ENCODE measurements at regions of chr19 and their contacts with region 1.

Region 1: GRCh38 chr19:40662921-40663694 is 27.3 kb downstream of the NUMBL start:
- DNase-seq: peak; percentile 71 to 79 (median 72)
- H3K4me3 ChIP-seq: peak overlapping the region; percentile 45 to 82 (median 71)
- H3K4me3 Mint-ChIP-seq: peak overlapping the region; percentile 74 to 90
- H3K27ac ChIP-seq: no peak overlapping the region
- H3K27ac Mint-ChIP-seq: peak overlapping the region in 4 of 7 donors; percentile 21 to 43 (median 33)
- H3K4me1 ChIP-seq: peaks cover 10 to 16% of the 10 kb centered on the region in 2 donors
- H3K4me1 Mint-ChIP-seq: peaks cover 9% of the 10 kb centered on the region
- H3K27me3 ChIP-seq: peaks cover 0 to 7% of the 10 kb centered on the region in 2 donors
- H3K27me3 Mint-ChIP-seq: peaks cover 14 to 22% (median 17%) of the 10 kb centered on the region in 3 donors
- CTCF ChIP-seq: peak; percentile 97

Region 2: GRCh38 chr19:40777937-40778705 is 115.0 kb after region 1 on chr19 and contains the start of gene RAB4B:
- intact Hi-C with region 1: no loop called
- DNase-seq: peak; percentile 99 to 100 (median 99)
- H3K4me3 ChIP-seq: peak within 1 kb of the TSS; percentile 69 to 89 (median 85)
- H3K4me3 Mint-ChIP-seq: peak within 1 kb of the TSS; percentile 94 to 97
- H3K27ac ChIP-seq: peak within 1 kb of the TSS; percentile 95 to 97
- H3K27ac Mint-ChIP-seq: peak within 1 kb of the TSS; percentile 97 to 100 (median 99)
- H3K4me1 ChIP-seq: peaks cover 19 to 24% of the 10 kb centered on the region in 2 donors
- H3K4me1 Mint-ChIP-seq: peaks cover 33% of the 10 kb centered on the region
- H3K27me3 ChIP-seq: no peaks in the 10 kb centered on the region
- H3K27me3 Mint-ChIP-seq: peaks cover 0 to 1% (median 0%) of the 10 kb centered on the region in 3 donors
- CTCF ChIP-seq: no peak
- polyA plus RNA-seq, gene RAB4B: 89.4 to 132 (median 108) TPM

Region 3: GRCh38 chr19:40815223-40815814 is 152.2 kb after region 1 on chr19:
- intact Hi-C with region 1: loop called (anchors 5 kb)
- DNase-seq: no peak
- H3K4me3 ChIP-seq: no peak overlapping the region
- H3K4me3 Mint-ChIP-seq: peak overlapping the region in 1 of 2 donors; percentile 6
- H3K27ac ChIP-seq: no peak overlapping the region
- H3K27ac Mint-ChIP-seq: peak overlapping the region in 1 of 7 donors; percentile 58
- H3K4me1 ChIP-seq: peaks cover 31 to 41% of the 10 kb centered on the region in 2 donors
- H3K4me1 Mint-ChIP-seq: peaks cover 46% of the 10 kb centered on the region
- H3K27me3 ChIP-seq: peaks cover 0 to 5% of the 10 kb centered on the region in 2 donors
- H3K27me3 Mint-ChIP-seq: peaks cover 13 to 31% (median 25%) of the 10 kb centered on the region in 3 donors
- CTCF ChIP-seq: no peak

Region 4: DNA sequence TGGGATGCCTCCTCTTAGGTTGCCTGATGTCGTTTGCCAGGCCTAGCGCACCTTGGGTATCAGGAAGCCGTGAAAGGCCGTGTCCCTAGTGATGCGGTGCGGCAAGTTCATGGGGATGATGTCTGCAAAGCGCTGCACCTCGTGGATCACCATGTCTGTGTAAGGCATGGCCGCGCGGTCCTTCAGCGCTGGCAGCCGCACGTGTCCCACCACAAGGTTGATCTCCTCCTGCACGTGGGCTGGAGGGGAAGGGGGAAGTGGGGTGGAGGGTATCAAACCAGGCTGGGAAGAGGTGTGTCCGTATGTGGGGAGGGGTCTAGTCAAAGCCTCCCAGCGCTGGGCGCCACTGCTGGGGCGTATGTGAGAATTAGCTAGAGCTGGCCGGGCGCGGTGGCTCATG is 159.1 kb after region 1 on chr19:
- intact Hi-C with region 1: loop called (anchors 5 kb)
- DNase-seq: no peak
- H3K4me3 ChIP-seq: peak overlapping the region in 1 of 3 experiments; percentile 59
- H3K4me3 Mint-ChIP-seq: peak overlapping the region in 1 of 2 donors; percentile 12
- H3K27ac ChIP-seq: peak overlapping the region; percentile 29 to 84
- H3K27ac Mint-ChIP-seq: peak overlapping the region; percentile 76 to 98 (median 96)
- H3K4me1 ChIP-seq: peaks cover 52 to 55% of the 10 kb centered on the region in 2 donors
- H3K4me1 Mint-ChIP-seq: peaks cover 63% of the 10 kb centered on the region
- H3K27me3 ChIP-seq: no peaks in the 10 kb centered on the region
- H3K27me3 Mint-ChIP-seq: peaks cover 2 to 6% (median 3%) of the 10 kb centered on the region in 3 donors
- CTCF ChIP-seq: no peak

Region 5: DNA sequence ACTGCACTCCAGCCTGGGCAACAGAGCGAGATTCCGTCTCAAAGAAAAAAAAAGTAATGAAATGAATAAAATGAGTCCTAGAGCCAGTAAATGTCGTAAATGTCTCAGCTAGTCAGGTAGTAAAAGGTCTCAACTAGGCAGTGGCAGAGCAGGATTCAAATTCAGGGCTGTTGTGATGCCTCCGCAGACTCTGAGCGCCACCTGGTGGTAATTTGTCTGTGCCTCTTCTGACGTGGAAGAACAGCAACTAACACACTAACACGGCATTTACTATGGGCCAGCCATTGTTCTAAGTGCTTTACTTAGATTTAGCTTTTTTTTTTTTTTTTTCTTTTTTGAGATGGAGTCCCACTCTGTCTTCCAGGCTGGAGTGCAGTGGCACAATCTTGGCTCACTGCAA is 481.3 kb after region 1 on chr19:
- intact Hi-C with region 1: loop called (anchors 2 to 5 kb)
- DNase-seq: peak; percentile 73 to 82 (median 78)
- H3K4me3 ChIP-seq: no peak overlapping the region
- H3K4me3 Mint-ChIP-seq: no peak overlapping the region
- H3K27ac ChIP-seq: no peak overlapping the region
- H3K27ac Mint-ChIP-seq: no peak overlapping the region
- H3K4me1 ChIP-seq: no peaks in the 10 kb centered on the region
- H3K4me1 Mint-ChIP-seq: peaks cover 2% of the 10 kb centered on the region
- H3K27me3 ChIP-seq: peaks cover 0 to 2% of the 10 kb centered on the region in 2 donors
- H3K27me3 Mint-ChIP-seq: peaks cover 5 to 17% (median 15%) of the 10 kb centered on the region in 3 donors
- CTCF ChIP-seq: peak; percentile 82

Region 6: DNA sequence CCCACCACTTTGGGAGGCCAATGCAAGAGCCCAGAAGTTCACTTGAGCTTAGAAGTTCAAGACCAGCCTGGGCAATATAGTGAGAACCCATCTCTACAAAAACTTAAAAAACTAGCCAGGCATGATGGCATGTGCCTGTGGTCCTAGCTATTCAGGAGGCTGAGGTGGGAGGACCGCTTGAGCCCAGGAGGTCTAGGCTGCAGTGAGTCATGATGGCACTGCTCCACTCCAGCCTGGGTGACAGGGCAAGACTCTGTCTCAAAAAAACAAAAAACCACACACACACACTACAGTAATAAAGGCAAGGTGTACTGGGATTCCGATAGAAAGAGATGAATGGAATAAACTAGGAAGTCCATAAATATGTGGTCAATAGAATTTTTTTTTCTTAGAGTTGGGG is 486.7 kb after region 1 on chr19:
- intact Hi-C with region 1: loop called (anchors 2 to 5 kb)
- DNase-seq: no peak
- H3K4me3 ChIP-seq: no peak overlapping the region
- H3K4me3 Mint-ChIP-seq: no peak overlapping the region
- H3K27ac ChIP-seq: no peak overlapping the region
- H3K27ac Mint-ChIP-seq: no peak overlapping the region
- H3K4me1 ChIP-seq: no peaks in the 10 kb centered on the region
- H3K4me1 Mint-ChIP-seq: no peaks in the 10 kb centered on the region
- H3K27me3 ChIP-seq: peaks cover 0 to 2% of the 10 kb centered on the region in 2 donors
- H3K27me3 Mint-ChIP-seq: peaks cover 5 to 14% (median 12%) of the 10 kb centered on the region in 3 donors
- CTCF ChIP-seq: no peak

Measured in CD14-positive monocyte (primary cell).